GM12878 (cell line): ENCODE measurements at regions of chr7 and their contacts with region 1.

Region 1: GRCh38 chr7:79298145-79298760 is 155.2 kb downstream of the MAGI2 start:
- DNase-seq: no peak
- ATAC-seq: peak; percentile 52; the same call in 1 of the 3 replicates
- H3K4me3 ChIP-seq: no peak overlapping the region
- H3K27ac ChIP-seq: no peak overlapping the region
- H3K4me1 ChIP-seq: no peaks in the 10 kb centered on the region
- H3K27me3 ChIP-seq: no peaks in the 10 kb centered on the region
- CTCF ChIP-seq: peak; percentile 59 to 70 (median 61)
- EP300 ChIP-seq: no peak
- POLR2A ChIP-seq: no peak
- RAD21 ChIP-seq: peak; percentile 59; the same call in 1 of the 2 replicates

Region 2: GRCh38 chr7:79317728-79318127 is 19.5 kb after region 1 on chr7:
- CTCF ChIA-PET with region 1: interaction called, 10 read pairs
- POLR2A ChIA-PET with region 1: interaction called, 4 read pairs
- RAD21 ChIA-PET with region 1: no interaction called
- SMC1A ChIA-PET with region 1: interaction called, 3 read pairs
- in situ Hi-C with region 1: no loop called
- intact Hi-C with region 1: no loop called
- DNase-seq: no peak
- ATAC-seq: no peak
- H3K4me3 ChIP-seq: no peak overlapping the region
- H3K27ac ChIP-seq: no peak overlapping the region
- H3K4me1 ChIP-seq: no peaks in the 10 kb centered on the region
- H3K27me3 ChIP-seq: no peaks in the 10 kb centered on the region
- CTCF ChIP-seq: no peak
- EP300 ChIP-seq: no peak
- POLR2A ChIP-seq: no peak
- RAD21 ChIP-seq: no peak

Region 3: DNA sequence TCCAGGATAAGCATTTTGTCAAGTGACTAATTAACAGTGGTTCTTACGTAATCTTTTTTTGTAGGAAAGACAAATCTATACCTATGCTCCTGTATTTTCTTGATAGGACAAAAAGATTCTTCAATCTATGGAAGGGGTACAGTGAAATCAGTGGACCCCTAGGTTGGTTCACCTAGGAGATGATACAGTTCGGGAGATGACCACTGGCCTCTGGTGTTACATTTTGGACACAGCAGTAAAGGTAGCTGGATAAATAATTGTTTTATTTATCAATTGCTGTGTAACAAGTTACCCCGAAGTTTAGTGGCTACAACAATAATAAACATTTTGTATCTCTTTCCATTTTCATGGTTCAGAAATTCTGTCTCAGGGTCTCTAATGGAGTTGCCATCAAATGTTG is 443.4 kb after region 1 on chr7:
- CTCF ChIA-PET with region 1: no interaction called
- POLR2A ChIA-PET with region 1: no interaction called
- RAD21 ChIA-PET with region 1: no interaction called
- SMC1A ChIA-PET with region 1: no interaction called
- in situ Hi-C with region 1: no loop called
- intact Hi-C with region 1: loop called (anchors 5 kb)
- DNase-seq: no peak
- ATAC-seq: no peak
- H3K4me3 ChIP-seq: no peak overlapping the region
- H3K27ac ChIP-seq: no peak overlapping the region
- H3K4me1 ChIP-seq: no peaks in the 10 kb centered on the region
- H3K27me3 ChIP-seq: no peaks in the 10 kb centered on the region
- CTCF ChIP-seq: no peak
- EP300 ChIP-seq: no peak
- POLR2A ChIP-seq: no peak
- RAD21 ChIP-seq: no peak

Region 4: GRCh38 chr7:80018941-80019752 is 720.9 kb after region 1 on chr7:
- CTCF ChIA-PET with region 1: interaction called, 5 read pairs
- POLR2A ChIA-PET with region 1: no interaction called
- RAD21 ChIA-PET with region 1: no interaction called
- SMC1A ChIA-PET with region 1: no interaction called
- in situ Hi-C with region 1: loop called (anchors 25 kb)
- intact Hi-C with region 1: loop called (anchors 5 kb)
- DNase-seq: no peak
- ATAC-seq: peak; percentile 95
- H3K4me3 ChIP-seq: no peak overlapping the region
- H3K27ac ChIP-seq: no peak overlapping the region
- H3K4me1 ChIP-seq: no peaks in the 10 kb centered on the region
- H3K27me3 ChIP-seq: no peaks in the 10 kb centered on the region
- CTCF ChIP-seq: peak; percentile 76 to 81 (median 76)
- EP300 ChIP-seq: no peak
- POLR2A ChIP-seq: no peak
- RAD21 ChIP-seq: peak; percentile 58